ENCODE measurements at regions of chr12 and their contacts with region 1.

Region 1: DNA sequence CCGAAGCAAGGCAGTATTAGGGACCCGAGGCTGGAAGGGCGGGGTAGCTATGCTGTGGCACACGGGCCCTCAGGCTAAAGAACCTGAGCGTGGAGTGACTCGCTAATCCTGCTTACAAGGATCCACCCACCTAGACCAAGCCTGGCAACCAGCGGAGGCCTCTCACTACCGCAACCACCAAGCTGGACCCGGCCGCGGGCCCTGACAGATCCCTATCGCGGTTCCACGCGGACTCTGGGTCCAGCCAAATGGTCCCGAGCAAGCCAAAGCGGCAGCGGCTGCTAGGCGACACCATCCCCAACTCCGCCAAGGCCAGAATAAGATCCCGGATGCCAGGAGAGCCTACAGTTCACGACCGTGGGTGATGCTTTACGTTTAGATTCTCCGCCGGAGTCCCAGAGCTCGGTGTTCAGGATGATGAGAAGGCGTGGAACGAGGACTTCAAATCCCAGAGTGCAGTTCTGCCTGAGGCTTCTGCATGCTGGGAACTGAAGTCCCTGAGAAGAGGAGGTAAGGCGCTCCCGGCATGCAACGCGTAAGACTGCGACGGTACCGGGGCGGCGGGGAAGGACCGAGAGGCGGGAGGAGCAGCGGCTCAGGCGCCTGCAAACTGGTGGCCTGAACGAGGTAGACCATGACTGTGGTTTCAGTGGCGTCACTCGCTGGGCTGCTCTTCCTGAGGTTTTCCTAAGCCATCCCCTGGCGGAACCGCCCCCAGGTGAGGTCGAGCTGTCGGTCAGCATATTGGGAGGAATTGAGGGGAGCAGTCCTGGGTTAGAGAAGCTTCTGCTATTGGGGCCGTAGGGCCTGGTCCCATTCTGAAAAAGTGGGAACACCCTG is at the starts of genes CEP290 and TMTC3:
- DNase-seq: peak; percentile 100
- H3K4me3 Mint-ChIP-seq: peak within 1 kb of the TSS; percentile 96
- H3K27ac Mint-ChIP-seq: peak within 1 kb of the TSS; percentile 81
- H3K4me1 Mint-ChIP-seq: peaks cover 38% of the 10 kb centered on the region
- H3K27me3 Mint-ChIP-seq: no peaks in the 10 kb centered on the region
- CTCF ChIP-seq: no peak
- total RNA-seq, gene CEP290: 18.7 and 22.3 TPM in 2 replicates
- total RNA-seq, gene TMTC3: 19.0 and 22.2 TPM in 2 replicates

Region 2: GRCh38 chr12:88362439-88362838 is 220.4 kb after region 1 on chr12:
- CTCF ChIA-PET with region 1: no interaction called
- POLR2A ChIA-PET with region 1: no interaction called
- intact Hi-C with region 1: no loop called
- DNase-seq: peak; percentile 54
- H3K4me3 Mint-ChIP-seq: peak overlapping the region; percentile 34
- H3K27ac Mint-ChIP-seq: peak overlapping the region; percentile 68
- H3K4me1 Mint-ChIP-seq: peaks cover 26% of the 10 kb centered on the region
- H3K27me3 Mint-ChIP-seq: no peaks in the 10 kb centered on the region
- CTCF ChIP-seq: no peak

Region 3: DNA sequence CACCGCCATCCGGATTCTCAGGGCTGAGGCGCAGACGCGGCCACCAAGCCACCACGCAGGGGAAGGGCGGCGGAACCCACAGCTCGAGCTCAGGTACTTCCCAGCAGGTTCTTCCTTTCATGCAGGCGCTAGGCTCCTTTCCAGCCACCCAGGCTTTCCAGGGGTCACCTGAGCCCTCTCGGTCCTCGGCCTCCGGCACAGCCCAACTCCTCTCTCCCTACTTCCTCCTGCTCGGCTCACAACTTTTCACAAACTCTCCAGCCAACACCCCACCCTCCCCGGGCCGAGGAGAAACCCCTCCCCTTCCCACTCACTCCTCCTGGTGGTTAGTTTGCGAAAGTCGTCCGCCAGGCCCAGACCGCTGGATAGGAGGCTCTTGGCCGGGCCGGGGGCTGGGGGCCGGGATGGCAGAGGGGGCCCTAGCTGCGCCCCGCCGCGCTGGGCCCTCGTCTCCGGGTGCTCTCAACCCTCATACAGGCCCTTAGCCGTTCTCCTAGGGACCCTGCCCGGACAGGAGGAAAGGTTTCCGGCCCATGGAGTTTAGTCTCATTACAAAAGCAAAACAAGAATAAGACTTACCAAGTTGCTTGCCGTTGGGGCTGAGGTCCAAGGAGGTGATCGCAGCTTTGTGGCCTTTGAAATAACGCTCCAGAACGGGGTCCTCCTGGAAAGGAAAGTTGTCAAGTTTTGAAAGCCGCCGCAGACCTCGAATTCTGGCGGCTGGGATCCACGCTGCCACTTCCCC is 1382.7 kb after region 1 on chr12 and contains the start of gene GALNT4:
- CTCF ChIA-PET with region 1: no interaction called
- POLR2A ChIA-PET with region 1: no interaction called
- intact Hi-C with region 1: loop called (anchors 10 kb)
- DNase-seq: peak; percentile 91
- H3K4me3 Mint-ChIP-seq: peak within 1 kb of the TSS; percentile 99
- H3K27ac Mint-ChIP-seq: peak within 1 kb of the TSS; percentile 79
- H3K4me1 Mint-ChIP-seq: peaks cover 29% of the 10 kb centered on the region
- H3K27me3 Mint-ChIP-seq: no peaks in the 10 kb centered on the region
- CTCF ChIP-seq: peak; percentile 73
- total RNA-seq, gene GALNT4: 2.6 and 2.8 TPM in 2 replicates

Measured in MCF 10A (cell line).